ENCODE measurements at regions of chr2 and their contacts with region 1.

Region 1: GRCh38 chr2:46984642-46985476 is 69.3 kb upstream of the MCFD2 start:
- DNase-seq: peak in 1 of 9 donors; percentile 53
- ATAC-seq: peak; percentile 69
- H3K4me3 ChIP-seq: no peak overlapping the region
- H3K4me3 Mint-ChIP-seq: peak overlapping the region in 7 of 10 donors; percentile 34 to 79 (median 58)
- H3K27ac ChIP-seq: peak overlapping the region; percentile 18
- H3K27ac Mint-ChIP-seq: peak overlapping the region; percentile 87 to 97 (median 92)
- H3K4me1 ChIP-seq: peaks cover 7 to 16% of the 10 kb centered on the region in 2 donors
- H3K4me1 Mint-ChIP-seq: peaks cover 18 to 73% (median 33%) of the 10 kb centered on the region in 7 donors
- H3K27me3 ChIP-seq: no peaks in the 10 kb centered on the region
- H3K27me3 Mint-ChIP-seq: no peaks in the 10 kb centered on the region

Region 2: GRCh38 chr2:45691171-45691999 is 1293.5 kb before region 1 on chr2:
- CTCF ChIA-PET with region 1: no interaction called
- POLR2A ChIA-PET with region 1: no interaction called
- intact Hi-C with region 1: no loop called
- DNase-seq: no peak
- ATAC-seq: no peak
- H3K4me3 ChIP-seq: no peak overlapping the region
- H3K4me3 Mint-ChIP-seq: no peak overlapping the region
- H3K27ac ChIP-seq: no peak overlapping the region
- H3K27ac Mint-ChIP-seq: no peak overlapping the region
- H3K4me1 ChIP-seq: no peaks in the 10 kb centered on the region
- H3K4me1 Mint-ChIP-seq: peaks cover 3 to 21% (median 8%) of the 10 kb centered on the region in 7 donors
- H3K27me3 ChIP-seq: no peaks in the 10 kb centered on the region
- H3K27me3 Mint-ChIP-seq: no peaks in the 10 kb centered on the region

Region 3: DNA sequence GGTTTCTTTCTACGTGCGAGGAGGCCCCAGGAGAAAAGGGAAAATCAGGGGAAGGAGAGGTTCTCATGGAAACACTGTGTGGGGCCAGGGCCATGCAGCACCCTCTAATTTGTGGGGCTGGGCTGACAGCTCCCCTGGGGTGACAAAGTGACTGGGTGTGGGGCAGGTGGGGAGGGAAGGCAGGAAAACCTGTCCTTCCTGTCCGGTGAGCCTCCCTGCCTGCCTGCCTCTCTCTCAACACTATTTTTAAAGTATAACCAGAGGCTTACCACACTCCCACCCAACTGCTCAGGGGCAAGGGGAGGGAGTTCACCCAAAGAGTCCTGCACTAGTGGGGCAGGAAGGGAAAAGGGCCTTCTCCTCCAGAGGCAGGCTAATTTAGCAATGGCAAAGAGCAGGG is 698.1 kb before region 1 on chr2:
- CTCF ChIA-PET with region 1: no interaction called
- POLR2A ChIA-PET with region 1: no interaction called
- intact Hi-C with region 1: no loop called
- DNase-seq: no peak
- ATAC-seq: no peak
- H3K4me3 ChIP-seq: no peak overlapping the region
- H3K4me3 Mint-ChIP-seq: no peak overlapping the region
- H3K27ac ChIP-seq: no peak overlapping the region
- H3K27ac Mint-ChIP-seq: no peak overlapping the region
- H3K4me1 ChIP-seq: no peaks in the 10 kb centered on the region
- H3K4me1 Mint-ChIP-seq: peaks cover 0 to 2% (median 0%) of the 10 kb centered on the region in 7 donors
- H3K27me3 ChIP-seq: no peaks in the 10 kb centered on the region
- H3K27me3 Mint-ChIP-seq: peaks cover 0 to 51% (median 7%) of the 10 kb centered on the region in 5 donors

Region 4: GRCh38 chr2:46942139-46942517 is 42.7 kb before region 1 on chr2:
- CTCF ChIA-PET with region 1: interaction called, 3 read pairs
- POLR2A ChIA-PET with region 1: interaction called, 6 read pairs
- intact Hi-C with region 1: loop called in 1 of 2 experiments (anchors 1 kb)
- DNase-seq: peak; percentile 53 to 79 (median 56)
- ATAC-seq: peak; percentile 68
- H3K4me3 ChIP-seq: peak overlapping the region; percentile 93
- H3K4me3 Mint-ChIP-seq: peak overlapping the region; percentile 90 to 100 (median 98)
- H3K27ac ChIP-seq: peak overlapping the region; percentile 94
- H3K27ac Mint-ChIP-seq: peak overlapping the region; percentile 89 to 99 (median 97)
- H3K4me1 ChIP-seq: peaks cover 22 to 43% of the 10 kb centered on the region in 2 donors
- H3K4me1 Mint-ChIP-seq: peaks cover 24 to 73% (median 64%) of the 10 kb centered on the region in 7 donors
- H3K27me3 ChIP-seq: no peaks in the 10 kb centered on the region
- H3K27me3 Mint-ChIP-seq: no peaks in the 10 kb centered on the region

Region 5: DNA sequence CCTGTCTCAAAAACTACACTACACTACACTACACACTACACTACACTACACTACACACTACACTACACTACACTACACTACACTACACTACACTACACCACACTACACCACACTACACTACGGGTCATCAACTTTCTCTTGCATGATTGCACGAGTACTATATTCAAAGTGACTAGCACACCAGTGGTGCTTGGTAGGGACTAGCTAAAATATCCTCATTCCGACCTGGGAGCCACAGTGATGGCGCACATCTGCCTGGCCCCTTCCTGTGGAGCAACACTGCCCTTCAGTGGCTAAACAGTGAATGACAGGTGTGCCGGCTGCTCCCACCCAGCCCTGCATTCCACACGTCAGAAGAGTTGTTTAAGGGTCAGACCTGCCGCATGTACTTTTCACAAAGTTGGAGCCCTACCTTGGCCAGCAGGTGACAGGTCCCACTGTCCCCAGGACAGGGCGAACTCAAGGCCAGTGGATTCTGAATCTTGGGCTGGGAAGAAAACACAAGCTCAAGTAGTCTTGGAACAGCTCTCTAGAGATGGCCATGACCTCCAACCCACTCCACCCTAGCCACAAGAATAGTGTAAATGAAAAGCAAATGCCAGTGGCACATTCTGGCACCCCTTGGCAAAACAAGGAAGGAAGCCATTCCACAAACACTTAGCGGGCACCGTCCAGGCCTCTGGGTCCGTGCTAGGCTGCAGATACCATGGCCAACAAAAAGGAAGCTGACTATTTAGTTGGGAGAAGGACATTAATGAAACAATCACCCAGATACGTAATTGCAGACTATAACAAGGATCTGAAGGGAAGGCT is 338.4 kb after region 1 on chr2:
- CTCF ChIA-PET with region 1: interaction called, 10 read pairs
- POLR2A ChIA-PET with region 1: no interaction called
- intact Hi-C with region 1: no loop called
- DNase-seq: peak; percentile 12 to 70 (median 51)
- ATAC-seq: peak; percentile 97
- H3K4me3 ChIP-seq: no peak overlapping the region
- H3K4me3 Mint-ChIP-seq: no peak overlapping the region
- H3K27ac ChIP-seq: no peak overlapping the region
- H3K27ac Mint-ChIP-seq: no peak overlapping the region
- H3K4me1 ChIP-seq: no peaks in the 10 kb centered on the region
- H3K4me1 Mint-ChIP-seq: no peaks in the 10 kb centered on the region
- H3K27me3 ChIP-seq: no peaks in the 10 kb centered on the region
- H3K27me3 Mint-ChIP-seq: peaks cover 0 to 11% (median 0%) of the 10 kb centered on the region in 5 donors